ENCODE measurements at regions of chr1 and their contacts with region 1.

Region 1: GRCh38 chr1:186680245-186681061 is at the start of gene PTGS2:
- DNase-seq: peak; percentile 96
- H3K4me3 Mint-ChIP-seq: peak within 1 kb of the TSS; percentile 96
- H3K27ac Mint-ChIP-seq: peak within 1 kb of the TSS; percentile 97
- H3K4me1 Mint-ChIP-seq: peaks cover 29% of the 10 kb centered on the region
- H3K27me3 Mint-ChIP-seq: no peaks in the 10 kb centered on the region
- CTCF ChIP-seq: peak; percentile 64
- total RNA-seq, gene PTGS2: 6.0 and 17.6 TPM in 2 replicates

Region 2: GRCh38 chr1:186375088-186375953 is 305.1 kb before region 1 on chr1 and contains the starts of genes ODR4 and TPR:
- CTCF ChIA-PET with region 1: interaction called, 5 read pairs
- POLR2A ChIA-PET with region 1: interaction called, 7 read pairs
- intact Hi-C with region 1: loop called (anchors 1 kb)
- DNase-seq: peak; percentile 100
- H3K4me3 Mint-ChIP-seq: peak within 1 kb of the TSS; percentile 96
- H3K27ac Mint-ChIP-seq: peak within 1 kb of the TSS; percentile 100
- H3K4me1 Mint-ChIP-seq: peaks cover 22% of the 10 kb centered on the region
- H3K27me3 Mint-ChIP-seq: no peaks in the 10 kb centered on the region
- CTCF ChIP-seq: peak; percentile 96
- total RNA-seq, gene ODR4: 36.9 and 39.9 TPM in 2 replicates
- total RNA-seq, gene TPR: 126 and 140 TPM in 2 replicates

Region 3: GRCh38 chr1:186482661-186483255 is 197.7 kb before region 1 on chr1:
- CTCF ChIA-PET with region 1: interaction called, 61 read pairs
- POLR2A ChIA-PET with region 1: interaction called, 5 read pairs
- intact Hi-C with region 1: loop called (anchors 1 kb)
- DNase-seq: peak; percentile 80
- H3K4me3 Mint-ChIP-seq: no peak overlapping the region
- H3K27ac Mint-ChIP-seq: no peak overlapping the region
- H3K4me1 Mint-ChIP-seq: peaks cover 7% of the 10 kb centered on the region
- H3K27me3 Mint-ChIP-seq: no peaks in the 10 kb centered on the region
- CTCF ChIP-seq: peak; percentile 99

Region 4: DNA sequence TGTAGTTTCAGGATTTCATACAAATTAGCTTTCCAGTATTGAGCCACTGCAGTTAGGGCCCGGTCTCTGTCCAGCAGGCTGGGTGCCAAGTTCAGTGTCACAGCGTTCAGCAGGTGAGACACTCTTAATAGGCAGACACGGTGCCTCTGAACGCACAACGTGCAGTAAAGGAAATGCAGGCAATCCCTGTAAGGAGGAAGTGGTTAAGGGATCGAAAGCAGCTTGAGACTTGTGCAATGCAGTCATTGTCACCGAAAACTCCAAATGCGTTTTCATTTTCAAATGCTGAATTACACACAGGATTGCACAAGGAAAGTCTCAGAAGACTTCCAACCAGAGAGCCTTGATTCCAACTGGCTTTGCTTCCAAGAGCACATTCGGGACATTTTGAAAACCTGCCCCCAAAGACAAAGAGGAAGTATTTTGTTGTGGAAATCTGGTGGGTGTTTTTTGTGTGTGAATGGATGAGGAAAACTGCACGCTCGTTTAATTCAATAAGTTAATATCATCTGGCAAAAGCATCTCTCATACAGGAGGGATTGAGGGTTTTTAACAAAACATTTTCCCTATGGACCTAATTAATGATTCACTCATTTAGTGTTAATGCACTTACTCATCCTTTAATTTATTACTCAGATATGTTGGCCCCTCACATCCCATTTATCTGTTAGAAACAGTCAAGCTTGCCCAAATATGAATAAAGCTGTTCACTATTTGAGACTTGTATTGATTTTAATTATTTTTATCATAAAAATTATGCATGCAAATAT is 61.9 kb before region 1 on chr1:
- CTCF ChIA-PET with region 1: interaction called, 10 read pairs
- POLR2A ChIA-PET with region 1: interaction called, 14 read pairs
- intact Hi-C with region 1: no loop called
- DNase-seq: peak; percentile 74
- H3K4me3 Mint-ChIP-seq: peak overlapping the region; percentile 56
- H3K27ac Mint-ChIP-seq: peak overlapping the region; percentile 46
- H3K4me1 Mint-ChIP-seq: peaks cover 15% of the 10 kb centered on the region
- H3K27me3 Mint-ChIP-seq: no peaks in the 10 kb centered on the region
- CTCF ChIP-seq: no peak

Region 5: DNA sequence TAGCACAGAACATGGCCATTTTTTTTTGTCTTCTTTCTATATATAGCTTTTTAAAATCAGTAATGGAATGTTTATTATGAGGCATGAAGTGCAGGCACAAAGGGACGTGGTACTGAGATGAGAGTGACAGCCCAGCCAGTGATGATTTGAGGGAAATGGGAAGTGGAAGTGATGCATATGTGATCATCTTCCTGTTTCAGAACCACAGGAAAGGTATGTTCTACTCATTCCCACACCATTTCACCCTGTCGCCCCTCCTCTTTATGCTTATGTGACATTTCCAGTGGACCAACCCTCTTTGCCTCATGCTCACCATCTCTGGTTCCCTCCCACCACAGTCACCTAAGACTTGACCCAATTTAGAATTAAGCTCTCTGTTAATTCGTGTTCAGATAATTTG is 24.6 kb before region 1 on chr1:
- CTCF ChIA-PET with region 1: interaction called, 9 read pairs
- POLR2A ChIA-PET with region 1: interaction called, 41 read pairs
- intact Hi-C with region 1: no loop called
- DNase-seq: no peak
- H3K4me3 Mint-ChIP-seq: no peak overlapping the region
- H3K27ac Mint-ChIP-seq: no peak overlapping the region
- H3K4me1 Mint-ChIP-seq: peaks cover 5% of the 10 kb centered on the region
- H3K27me3 Mint-ChIP-seq: no peaks in the 10 kb centered on the region
- CTCF ChIP-seq: no peak

Region 6: DNA sequence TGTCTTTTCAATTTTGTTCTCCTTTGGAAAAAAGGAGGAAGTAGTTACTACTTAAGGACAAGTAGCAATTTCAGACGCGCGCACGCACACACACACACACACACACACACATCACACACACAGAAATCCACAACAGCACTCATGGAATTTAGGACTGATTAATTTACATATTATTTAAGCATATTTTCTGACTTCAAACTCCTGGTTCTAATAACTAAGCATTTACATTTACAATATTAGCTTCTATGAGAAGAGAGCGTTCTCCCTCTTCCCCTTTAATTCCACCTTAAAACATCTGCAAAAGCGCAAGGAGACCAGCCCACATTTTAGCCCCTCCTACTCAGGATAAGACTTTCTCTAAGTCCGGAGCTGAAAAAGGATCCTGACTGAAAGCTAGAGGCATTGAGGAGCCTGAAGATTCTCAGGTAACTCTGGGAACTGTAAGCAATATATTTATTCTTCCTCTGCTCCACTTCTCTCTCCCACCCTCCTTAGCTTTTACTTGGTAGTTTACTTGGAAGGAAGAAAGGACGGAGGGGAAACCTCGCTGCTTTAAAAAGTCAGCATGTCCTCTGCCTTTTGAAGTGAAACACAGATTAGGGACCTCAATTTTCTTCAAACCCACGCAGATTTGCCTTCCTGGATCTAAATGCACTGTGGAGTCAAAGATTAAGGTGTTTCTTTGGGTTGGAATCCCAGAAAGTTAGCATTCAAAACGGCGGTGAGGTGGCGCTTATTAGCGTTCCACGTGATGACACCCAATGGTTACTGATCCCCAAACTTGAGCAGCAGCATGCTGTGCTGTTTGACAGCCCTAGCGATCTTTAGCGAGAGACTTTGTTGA is 148.4 kb after region 1 on chr1 and contains the start of gene PLA2G4A:
- CTCF ChIA-PET with region 1: interaction called, 6 read pairs
- POLR2A ChIA-PET with region 1: interaction called, 12 read pairs
- intact Hi-C with region 1: loop called (anchors 2 kb)
- DNase-seq: peak; percentile 89
- H3K4me3 Mint-ChIP-seq: peak within 1 kb of the TSS; percentile 97
- H3K27ac Mint-ChIP-seq: peak within 1 kb of the TSS; percentile 65
- H3K4me1 Mint-ChIP-seq: no peaks in the 10 kb centered on the region
- H3K27me3 Mint-ChIP-seq: no peaks in the 10 kb centered on the region
- CTCF ChIP-seq: no peak
- total RNA-seq, gene PLA2G4A: 2.1 and 3.8 TPM in 2 replicates